Sigmoid colon (tissue), 7 donors: ENCODE measurements at regions of chr7 and their contacts with region 1.

Region 1: GRCh38 chr7:38398725-38399321 is 125.4 kb upstream of the TARP start:
- DNase-seq: no peak
- H3K4me3 ChIP-seq: no peak overlapping the region
- H3K27ac ChIP-seq: no peak overlapping the region
- H3K4me1 ChIP-seq: peaks cover 0 to 4% (median 0%) of the 10 kb centered on the region in 4 donors
- H3K27me3 ChIP-seq: no peaks in the 10 kb centered on the region
- CTCF ChIP-seq: peak in 3 of 4 experiments; percentile 63 to 84 (median 71)
- EP300 ChIP-seq: no peak
- POLR2A ChIP-seq: no peak

Region 2: DNA sequence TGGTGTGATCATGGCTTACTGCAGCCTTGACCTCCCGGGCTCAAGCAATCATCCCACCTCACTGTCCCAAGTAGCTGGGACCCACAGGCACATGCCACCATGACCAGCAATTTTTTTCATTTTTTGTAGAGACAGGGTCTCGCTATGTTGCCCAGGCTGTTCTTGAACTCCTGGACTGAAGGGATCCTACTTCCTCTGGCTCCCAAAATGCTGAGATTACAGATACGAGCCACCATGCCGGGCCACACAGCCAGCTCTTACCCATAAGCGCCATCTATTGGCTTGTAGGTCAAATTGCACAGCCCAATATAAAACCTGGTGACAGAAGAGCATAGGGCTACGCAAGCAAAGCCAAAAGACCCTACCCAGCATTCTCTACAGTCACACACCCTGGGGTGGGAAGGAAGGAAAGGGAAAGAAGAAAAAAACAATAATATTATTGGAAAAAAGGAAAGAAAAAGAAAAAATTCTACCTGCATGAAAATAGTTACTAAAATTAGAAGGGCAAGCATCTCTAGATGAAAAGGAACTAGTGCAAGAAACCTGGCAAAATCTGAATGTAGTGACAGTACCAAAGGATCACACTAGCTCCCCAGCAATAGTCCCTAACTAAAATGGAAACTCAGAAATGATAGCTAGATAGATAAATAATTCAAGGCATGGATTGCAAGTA is 261.7 kb after region 1 on chr7:
- intact Hi-C with region 1: loop called (anchors 5 kb)
- DNase-seq: no peak
- H3K4me3 ChIP-seq: no peak overlapping the region
- H3K27ac ChIP-seq: no peak overlapping the region
- H3K4me1 ChIP-seq: no peaks in the 10 kb centered on the region
- H3K27me3 ChIP-seq: no peaks in the 10 kb centered on the region
- CTCF ChIP-seq: peak in 3 of 4 experiments; percentile 23 to 37 (median 35)
- EP300 ChIP-seq: no peak
- POLR2A ChIP-seq: no peak

Region 3: GRCh38 chr7:39027491-39027890 is 628.7 kb after region 1 on chr7:
- intact Hi-C with region 1: no loop called
- DNase-seq: no peak
- H3K4me3 ChIP-seq: no peak overlapping the region
- H3K27ac ChIP-seq: no peak overlapping the region
- H3K4me1 ChIP-seq: no peaks in the 10 kb centered on the region
- H3K27me3 ChIP-seq: no peaks in the 10 kb centered on the region
- CTCF ChIP-seq: no peak
- EP300 ChIP-seq: no peak
- POLR2A ChIP-seq: no peak